Calu3 (cell line): ENCODE measurements at regions of chrX and their contacts with region 1.

Region 1: DNA sequence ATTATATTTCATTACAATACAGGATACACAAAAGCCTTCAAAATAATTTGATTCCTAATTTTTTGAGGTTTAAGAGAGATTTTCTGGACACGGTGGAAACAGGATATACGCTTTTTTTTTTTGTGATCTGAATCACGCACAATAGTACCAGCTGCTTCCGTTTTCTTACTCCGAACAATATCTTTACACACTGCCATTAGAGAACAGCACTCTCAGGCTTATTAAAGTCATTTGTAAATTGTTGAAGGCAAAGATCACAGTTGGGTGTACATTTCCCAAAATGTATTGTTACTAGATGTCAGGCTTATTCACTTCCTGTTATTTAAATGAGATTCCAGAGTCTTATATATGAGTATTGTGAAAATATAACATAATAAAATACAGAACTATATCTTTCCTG is 71.5 kb downstream of the TMEM47 start:
- DNase-seq: no peak
- H3K4me3 Mint-ChIP-seq: no peak overlapping the region
- H3K27ac Mint-ChIP-seq: no peak overlapping the region
- H3K4me1 Mint-ChIP-seq: peaks cover 26% of the 10 kb centered on the region
- H3K27me3 Mint-ChIP-seq: no peaks in the 10 kb centered on the region
- CTCF ChIP-seq: no peak

Region 2: DNA sequence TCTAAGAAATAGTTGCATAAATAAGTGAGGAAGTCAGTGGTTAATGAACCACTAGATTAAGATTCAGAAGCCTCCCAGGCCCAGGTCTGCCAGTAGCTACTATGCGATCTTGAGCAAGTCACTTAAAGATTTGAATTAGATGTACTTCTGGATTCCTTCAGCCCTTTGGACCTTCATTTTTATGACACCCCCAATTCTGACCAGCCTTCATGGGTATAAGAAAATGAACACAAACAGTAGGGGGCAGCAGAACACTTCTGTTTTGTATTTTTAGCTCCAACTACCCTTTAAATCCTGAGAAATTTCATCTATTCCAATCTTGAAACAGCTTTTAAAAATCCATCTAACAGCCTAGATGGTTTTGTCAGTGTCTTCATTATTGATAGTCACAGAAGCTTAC is 52.6 kb after region 1 on chrX:
- CTCF ChIA-PET with region 1: no interaction called
- intact Hi-C with region 1: loop called (anchors 5 kb)
- DNase-seq: no peak
- H3K4me3 Mint-ChIP-seq: no peak overlapping the region
- H3K27ac Mint-ChIP-seq: no peak overlapping the region
- H3K4me1 Mint-ChIP-seq: peaks cover 27% of the 10 kb centered on the region
- H3K27me3 Mint-ChIP-seq: no peaks in the 10 kb centered on the region
- CTCF ChIP-seq: peak; percentile 38

Region 3: GRCh38 chrX:34893741-34894140 is 308.2 kb after region 1 on chrX:
- CTCF ChIA-PET with region 1: no interaction called
- intact Hi-C with region 1: loop called (anchors 5 kb)
- DNase-seq: no peak
- H3K4me3 Mint-ChIP-seq: no peak overlapping the region
- H3K27ac Mint-ChIP-seq: no peak overlapping the region
- H3K4me1 Mint-ChIP-seq: no peaks in the 10 kb centered on the region
- H3K27me3 Mint-ChIP-seq: no peaks in the 10 kb centered on the region
- CTCF ChIP-seq: peak; percentile 17